ENCODE measurements at regions of chr19 and their contacts with region 1.

Region 1: GRCh38 chr19:2328401-2329148 is at the starts of genes LSM7 and SPPL2B:
- DNase-seq: peak; percentile 95
- ATAC-seq: peak; percentile 98
- total RNA-seq, gene LSM7: 37.3 TPM
- total RNA-seq, gene SPPL2B: 23.9 TPM

Region 2: GRCh38 chr19:1935484-1936208 is 392.9 kb before region 1 on chr19:
- intact Hi-C with region 1: loop called (anchors 10 kb)
- DNase-seq: no peak
- ATAC-seq: no peak

Region 3: DNA sequence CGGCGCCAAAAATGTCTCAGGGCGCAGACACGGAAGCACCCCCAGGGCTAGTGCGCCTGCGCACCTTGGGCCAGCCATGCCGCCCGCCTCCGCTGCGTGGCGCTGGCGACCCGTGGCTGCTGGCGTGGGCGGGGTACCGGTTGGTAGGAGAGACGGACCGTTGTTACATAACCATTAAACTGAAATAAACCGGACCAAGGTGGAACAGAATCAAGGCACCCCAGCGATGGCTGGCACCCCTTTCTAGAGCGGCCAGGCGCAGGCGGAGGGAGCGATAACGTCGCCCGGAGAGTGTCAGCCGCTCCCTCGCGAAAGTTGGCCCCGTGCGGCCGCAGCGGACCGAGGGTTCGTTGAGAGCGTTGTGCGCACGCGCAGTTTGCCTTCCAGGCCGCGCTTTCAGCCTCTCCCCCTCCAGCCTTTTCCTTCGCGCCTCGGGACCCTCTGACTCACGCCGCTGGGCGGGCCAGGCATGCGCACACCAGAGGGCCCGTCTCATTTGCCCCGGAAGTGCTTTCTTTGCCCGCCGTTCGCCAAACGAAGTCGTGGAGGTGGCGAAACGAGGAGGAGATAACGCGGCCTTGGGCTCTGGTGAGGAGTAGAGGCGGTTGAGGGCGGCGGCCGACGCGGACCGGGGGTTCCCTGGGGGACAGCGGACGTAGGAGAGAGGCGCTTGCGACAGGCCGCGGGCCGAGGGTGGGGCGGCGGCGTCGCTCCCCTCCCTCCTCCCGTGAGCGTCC is 92.1 kb before region 1 on chr19 and contains the starts of genes PLEKHJ1 and SF3A2:
- intact Hi-C with region 1: no loop called
- DNase-seq: peak; percentile 98
- ATAC-seq: peak; percentile 94
- total RNA-seq, gene PLEKHJ1: 59.6 TPM
- total RNA-seq, gene SF3A2: 30.0 TPM